HAP-1 (cell line): ENCODE measurements at regions of chr7 and their contacts with region 1.

Region 1: DNA sequence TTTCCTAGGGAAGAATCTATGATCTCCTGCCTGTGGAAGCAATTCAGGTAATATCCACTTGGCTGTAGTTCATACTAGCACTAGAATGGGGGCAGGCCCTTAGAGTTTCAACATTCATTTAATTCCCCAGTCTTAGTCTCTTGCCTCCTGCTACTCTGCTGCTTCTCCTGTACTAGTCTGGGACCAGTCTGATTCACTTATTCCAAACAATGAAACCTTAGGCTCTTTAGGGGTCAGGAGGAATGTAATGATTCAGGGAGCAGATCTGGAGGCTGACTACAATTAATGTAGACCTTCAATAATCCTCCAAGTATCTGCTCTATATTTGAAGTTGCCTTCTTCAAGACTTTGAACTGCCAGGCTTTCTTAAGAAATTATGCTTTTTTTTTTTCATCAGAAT is 101.8 kb downstream of the GNAT3 start:
- DNase-seq: no peak
- H3K4me3 ChIP-seq: no peak overlapping the region
- H3K4me1 ChIP-seq: peaks cover 22% of the 10 kb centered on the region
- H3K27me3 ChIP-seq: no peaks in the 10 kb centered on the region

Region 2: DNA sequence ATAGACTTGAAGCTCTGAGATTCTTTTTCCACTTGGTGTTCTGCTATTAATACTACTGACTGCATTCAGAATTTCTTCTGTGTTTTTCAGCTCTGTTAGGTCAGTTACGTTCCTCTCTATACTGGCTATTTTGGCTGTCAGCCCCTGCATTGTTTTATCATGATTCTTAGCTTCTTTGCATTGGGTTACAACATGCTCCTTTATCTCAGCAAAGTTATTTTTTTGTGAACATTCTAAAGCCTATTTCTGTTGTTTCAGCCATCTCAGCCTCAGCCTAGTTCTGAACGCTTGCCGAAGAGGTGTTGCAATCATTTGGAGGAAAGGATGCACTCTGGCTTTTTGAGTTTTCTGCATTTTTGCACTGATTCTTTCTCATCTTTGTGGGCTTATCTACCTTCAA is 476.9 kb before region 1 on chr7:
- in situ Hi-C with region 1: no loop called
- DNase-seq: no peak
- H3K4me3 ChIP-seq: no peak overlapping the region
- H3K4me1 ChIP-seq: no peaks in the 10 kb centered on the region
- H3K27me3 ChIP-seq: no peaks in the 10 kb centered on the region

Region 3: GRCh38 chr7:80134536-80135320 is 275.4 kb before region 1 on chr7 and contains the start of gene GNAI1:
- in situ Hi-C with region 1: loop called (anchors 25 kb)
- DNase-seq: peak; percentile 61 to 87
- H3K4me3 ChIP-seq: peak within 1 kb of the TSS; percentile 95
- H3K4me1 ChIP-seq: peaks cover 26% of the 10 kb centered on the region
- H3K27me3 ChIP-seq: no peaks in the 10 kb centered on the region